ENCODE measurements at regions of chr20 and their contacts with region 1.

Region 1: DNA sequence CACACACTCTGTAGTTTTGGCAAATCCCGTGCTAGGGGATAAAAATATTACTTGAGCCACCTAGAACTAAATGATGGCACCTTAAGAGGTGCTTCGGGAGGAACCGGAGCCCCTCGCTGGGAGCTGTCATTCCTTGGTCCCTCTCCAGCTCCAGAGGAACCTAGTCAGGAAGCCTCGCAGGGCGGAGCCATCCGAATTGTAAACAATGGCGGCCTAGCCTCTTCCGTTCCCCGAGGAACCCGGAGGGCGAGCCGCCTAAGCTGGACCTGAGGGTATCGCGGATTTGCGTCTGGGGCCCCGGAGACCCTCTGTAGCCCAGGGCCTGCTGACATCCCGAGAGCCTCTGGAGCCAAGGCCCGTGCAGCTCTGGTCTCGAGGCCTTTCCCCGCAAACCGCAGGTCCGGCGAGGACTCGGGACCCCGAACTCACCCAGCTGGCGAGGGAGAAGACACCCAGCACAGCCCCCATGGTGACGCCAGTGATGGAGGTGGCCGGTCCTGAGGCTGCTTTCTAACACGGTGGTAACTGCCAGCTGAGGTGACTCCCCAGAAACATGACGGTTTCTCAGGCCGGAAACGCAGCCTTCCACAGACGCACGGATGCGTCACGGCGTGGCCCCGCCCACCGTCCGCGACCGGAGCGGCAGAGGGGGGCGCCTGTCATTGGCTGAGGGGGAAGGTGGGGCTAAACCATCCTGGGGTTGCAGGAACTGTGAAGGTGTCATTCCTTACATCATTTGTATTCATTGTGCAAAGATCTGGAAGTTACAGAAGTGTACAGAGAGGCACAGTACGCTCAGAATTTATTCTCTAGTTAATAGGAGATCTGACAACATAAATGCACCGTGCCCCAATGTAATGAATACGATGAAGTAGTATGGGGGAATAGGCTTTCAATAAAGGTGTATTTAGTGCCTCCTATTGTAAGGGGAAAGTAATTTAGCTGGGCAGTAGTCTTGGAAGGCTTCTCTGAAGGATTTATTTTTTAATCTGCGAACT is at the start of gene SERINC3:
- DNase-seq: peak; percentile 98
- ATAC-seq: peak; percentile 96
- H3K4me3 ChIP-seq: peak within 1 kb of the TSS; percentile 86
- H3K27ac ChIP-seq: peak within 1 kb of the TSS; percentile 89
- H3K4me1 ChIP-seq: peaks cover 35% of the 10 kb centered on the region
- H3K27me3 ChIP-seq: no peaks in the 10 kb centered on the region
- CTCF ChIP-seq: peak; percentile 57
- total RNA-seq, gene SERINC3: 75.4 and 92.6 TPM in 2 replicates

Region 2: GRCh38 chr20:44210422-44211176 is 311.2 kb before region 1 on chr20 and contains the start of gene OSER1:
- CTCF ChIA-PET with region 1: no interaction called
- POLR2A ChIA-PET with region 1: no interaction called
- intact Hi-C with region 1: loop called (anchors 5 kb)
- DNase-seq: peak; percentile 99
- ATAC-seq: peak; percentile 80
- H3K4me3 ChIP-seq: peak within 1 kb of the TSS; percentile 87
- H3K27ac ChIP-seq: peak within 1 kb of the TSS; percentile 77
- H3K4me1 ChIP-seq: peaks cover 48% of the 10 kb centered on the region
- H3K27me3 ChIP-seq: no peaks in the 10 kb centered on the region
- CTCF ChIP-seq: no peak
- total RNA-seq, gene OSER1: 29.0 and 34.8 TPM in 2 replicates

Region 3: DNA sequence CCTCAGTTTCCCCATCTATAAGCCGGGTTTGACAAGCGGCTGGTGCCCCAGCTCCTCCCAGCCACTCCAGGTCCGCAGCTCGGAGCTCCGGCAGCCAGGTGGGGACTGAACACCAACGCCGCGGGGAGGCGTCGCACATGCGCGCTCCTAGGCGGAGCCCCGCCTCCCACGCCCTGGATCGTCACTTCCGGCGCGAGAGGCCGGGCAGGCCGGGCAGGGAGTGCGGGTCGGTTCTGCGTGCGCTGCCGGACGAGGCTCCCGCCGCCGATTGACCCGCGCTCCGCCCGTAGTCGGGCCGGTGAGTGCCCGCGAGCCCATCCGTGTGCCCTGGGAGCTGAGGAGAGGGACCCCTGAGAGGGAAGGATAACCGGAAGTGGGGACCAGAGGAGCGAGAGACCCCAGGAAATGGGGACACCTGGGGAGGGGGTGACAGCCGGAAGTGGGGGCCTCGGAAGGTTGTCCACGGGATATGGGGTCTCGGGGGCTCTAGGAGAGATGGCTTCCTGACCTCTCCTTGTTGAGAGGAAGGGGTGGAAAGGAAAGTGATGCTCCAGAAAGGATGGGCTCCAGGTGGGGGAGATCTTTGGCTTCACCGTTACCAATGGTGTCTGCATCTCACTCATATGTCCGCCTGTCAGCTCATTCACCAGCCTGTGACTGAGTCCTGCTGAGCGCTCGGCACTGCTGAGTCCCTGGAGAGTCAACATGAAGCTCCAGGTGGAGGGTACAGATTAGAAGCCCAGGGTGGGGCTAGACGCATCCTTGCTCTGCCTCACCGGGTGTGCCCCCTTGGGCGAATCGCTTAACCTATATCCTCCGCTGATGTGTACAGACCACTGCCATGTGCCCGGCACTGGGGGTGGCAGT is 45.9 kb before region 1 on chr20 and contains the start of gene TTPAL:
- CTCF ChIA-PET with region 1: no interaction called
- POLR2A ChIA-PET with region 1: interaction called, 3 read pairs
- intact Hi-C with region 1: loop called (anchors 5 kb)
- DNase-seq: peak; percentile 97
- ATAC-seq: peak; percentile 92
- H3K4me3 ChIP-seq: peak within 1 kb of the TSS; percentile 77
- H3K27ac ChIP-seq: peak within 1 kb of the TSS; percentile 48
- H3K4me1 ChIP-seq: peaks cover 20% of the 10 kb centered on the region
- H3K27me3 ChIP-seq: no peaks in the 10 kb centered on the region
- CTCF ChIP-seq: peak; percentile 41; the same call in 1 of the 2 replicates
- total RNA-seq, gene TTPAL: 14.0 and 17.9 TPM in 2 replicates

Region 4: DNA sequence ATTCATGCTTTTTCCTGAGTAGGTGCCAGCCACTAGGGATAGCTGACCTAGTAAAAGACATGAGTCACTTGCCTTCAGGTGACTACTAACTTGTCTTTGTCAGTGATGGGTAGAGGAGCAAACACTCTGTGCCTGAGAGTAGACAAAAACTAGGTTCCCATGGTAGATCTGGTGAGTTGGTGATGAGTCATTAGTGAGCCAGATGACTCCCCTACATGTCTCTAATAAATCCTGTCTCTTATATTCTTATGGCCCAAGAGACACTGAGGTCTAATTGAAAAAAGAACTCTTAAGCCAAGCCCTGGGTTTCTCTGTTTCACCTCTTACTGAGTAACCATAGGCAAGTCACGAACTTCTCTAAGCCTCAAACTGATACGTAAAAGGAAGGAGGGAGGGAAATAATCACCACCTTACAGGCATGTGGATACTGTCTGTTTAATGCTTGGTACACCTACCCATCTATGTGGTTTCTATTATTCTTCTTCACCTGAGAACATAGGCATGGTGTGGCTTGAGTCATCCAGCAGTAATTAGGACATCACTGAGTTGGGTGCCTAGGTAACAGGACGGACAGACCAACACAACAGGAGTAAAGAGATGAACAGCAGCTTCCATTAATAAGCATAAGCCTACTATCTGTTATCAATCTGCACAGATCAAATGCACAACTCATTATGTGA is 25.8 kb before region 1 on chr20:
- CTCF ChIA-PET with region 1: no interaction called
- POLR2A ChIA-PET with region 1: interaction called, 6 read pairs
- intact Hi-C with region 1: loop called (anchors 1 kb)
- DNase-seq: peak; percentile 99
- ATAC-seq: peak; percentile 82
- H3K4me3 ChIP-seq: peak overlapping the region; percentile 20; the same call in 1 of the 2 replicates
- H3K27ac ChIP-seq: peak overlapping the region; percentile 96
- H3K4me1 ChIP-seq: peaks cover 50% of the 10 kb centered on the region
- H3K27me3 ChIP-seq: no peaks in the 10 kb centered on the region
- CTCF ChIP-seq: no peak

Region 5: DNA sequence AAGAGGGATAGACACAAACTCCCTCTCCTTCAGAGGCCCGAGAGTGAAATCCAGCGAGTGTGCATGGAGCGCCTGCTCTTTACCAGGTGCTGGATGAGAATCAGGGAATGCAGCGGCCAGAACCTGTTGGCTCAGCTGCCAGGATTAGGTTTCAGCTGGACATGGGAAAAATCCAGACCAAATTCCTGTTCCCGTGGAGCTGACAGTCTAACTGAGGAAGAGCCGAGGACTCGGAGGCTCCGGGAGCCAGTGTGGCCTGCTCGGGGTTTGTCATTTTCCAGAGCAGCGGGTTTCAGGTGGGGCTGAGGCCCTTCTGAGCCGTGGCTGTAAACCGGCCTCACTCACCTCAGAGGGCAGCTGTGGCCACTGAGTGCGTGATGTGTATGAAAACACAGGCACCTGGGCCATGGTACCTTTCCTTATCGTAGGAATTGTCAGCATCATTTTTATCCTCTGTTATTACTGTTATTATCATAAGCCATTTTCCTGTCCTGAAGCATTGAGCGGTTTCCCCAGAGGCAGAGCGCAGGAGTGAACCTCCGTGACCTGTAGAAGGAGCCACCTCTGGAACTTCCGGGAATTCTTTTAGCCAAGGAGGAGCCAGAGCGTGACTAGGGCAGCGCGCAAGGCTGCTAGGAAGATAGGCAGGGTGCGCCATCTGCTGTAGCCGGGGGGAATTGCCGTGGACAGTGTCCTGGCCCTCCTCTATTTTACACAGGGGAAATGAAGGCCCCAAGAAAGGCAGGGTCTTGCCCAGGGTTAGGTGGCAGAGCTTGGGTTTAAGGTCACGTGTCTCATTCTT is 87.9 kb after region 1 on chr20:
- CTCF ChIA-PET with region 1: no interaction called
- POLR2A ChIA-PET with region 1: no interaction called
- intact Hi-C with region 1: no loop called
- DNase-seq: peak; percentile 94
- ATAC-seq: peak; percentile 97
- H3K4me3 ChIP-seq: no peak overlapping the region
- H3K27ac ChIP-seq: peak overlapping the region; percentile 65
- H3K4me1 ChIP-seq: peaks cover 8% of the 10 kb centered on the region
- H3K27me3 ChIP-seq: no peaks in the 10 kb centered on the region
- CTCF ChIP-seq: peak; percentile 98

Region 6: GRCh38 chr20:44642203-44643153 is 120.7 kb after region 1 on chr20:
- CTCF ChIA-PET with region 1: no interaction called
- POLR2A ChIA-PET with region 1: no interaction called
- intact Hi-C with region 1: no loop called
- DNase-seq: peak; percentile 50
- ATAC-seq: peak; percentile 56
- H3K4me3 ChIP-seq: no peak overlapping the region
- H3K27ac ChIP-seq: peak overlapping the region; percentile 88
- H3K4me1 ChIP-seq: peaks cover 31% of the 10 kb centered on the region
- H3K27me3 ChIP-seq: no peaks in the 10 kb centered on the region
- CTCF ChIP-seq: no peak

Region 7: DNA sequence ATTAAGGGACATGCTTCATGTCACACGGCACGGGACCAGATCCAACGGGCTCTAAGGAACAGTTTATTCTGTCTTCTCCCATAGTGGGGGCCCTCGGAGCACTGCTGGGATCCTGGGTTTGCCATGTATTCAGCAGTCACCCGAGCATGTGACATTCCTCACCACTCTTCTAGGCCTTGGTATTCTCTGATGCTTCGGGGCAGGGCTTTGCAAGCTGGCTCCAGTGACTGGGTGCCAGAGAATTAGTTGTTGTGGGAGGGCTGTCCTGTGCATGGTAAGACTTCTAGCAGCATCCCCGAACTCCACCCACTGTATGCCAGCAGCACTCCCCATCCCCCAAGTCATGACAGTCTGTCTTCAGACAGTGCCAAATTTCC is 198.8 kb after region 1 on chr20:
- CTCF ChIA-PET with region 1: no interaction called
- POLR2A ChIA-PET with region 1: no interaction called
- intact Hi-C with region 1: no loop called
- DNase-seq: peak; percentile 77
- ATAC-seq: peak; percentile 73
- H3K4me3 ChIP-seq: no peak overlapping the region
- H3K27ac ChIP-seq: peak overlapping the region; percentile 48
- H3K4me1 ChIP-seq: peaks cover 19% of the 10 kb centered on the region
- H3K27me3 ChIP-seq: no peaks in the 10 kb centered on the region
- CTCF ChIP-seq: no peak

Region 8: GRCh38 chr20:44849703-44850102 is 327.9 kb after region 1 on chr20:
- CTCF ChIA-PET with region 1: no interaction called
- POLR2A ChIA-PET with region 1: no interaction called
- intact Hi-C with region 1: no loop called
- DNase-seq: no peak
- ATAC-seq: no peak; the same call in 1 of the 2 replicates
- H3K4me3 ChIP-seq: no peak overlapping the region
- H3K27ac ChIP-seq: no peak overlapping the region
- H3K4me1 ChIP-seq: no peaks in the 10 kb centered on the region
- H3K27me3 ChIP-seq: peaks cover 60% of the 10 kb centered on the region
- CTCF ChIP-seq: peak; percentile 30; the same call in 1 of the 2 replicates

Region 9: GRCh38 chr20:45254869-45255266 is 733.1 kb after region 1 on chr20:
- CTCF ChIA-PET with region 1: no interaction called
- POLR2A ChIA-PET with region 1: interaction called, 16 read pairs
- intact Hi-C with region 1: no loop called
- DNase-seq: peak; percentile 67
- ATAC-seq: peak; percentile 23; the same call in 1 of the 2 replicates
- H3K4me3 ChIP-seq: peak overlapping the region; percentile 58; the same call in 1 of the 2 replicates
- H3K27ac ChIP-seq: peak overlapping the region; percentile 86
- H3K4me1 ChIP-seq: peaks cover 38% of the 10 kb centered on the region
- H3K27me3 ChIP-seq: no peaks in the 10 kb centered on the region
- CTCF ChIP-seq: no peak